ENCODE measurements at regions of chr5 and their contacts with region 1.

Region 1: GRCh38 chr5:68406767-68407241 is 191.2 kb downstream of the PIK3R1 start:
- DNase-seq: no peak
- H3K4me3 Mint-ChIP-seq: no peak overlapping the region
- H3K27ac Mint-ChIP-seq: no peak overlapping the region
- H3K4me1 Mint-ChIP-seq: peaks cover 23% of the 10 kb centered on the region
- H3K27me3 Mint-ChIP-seq: no peaks in the 10 kb centered on the region

Region 2: GRCh38 chr5:68424799-68425537 is 18.2 kb after region 1 on chr5:
- CTCF ChIA-PET with region 1: interaction called, 3 read pairs
- POLR2A ChIA-PET with region 1: no interaction called
- intact Hi-C with region 1: loop called (anchors 2 kb)
- DNase-seq: peak; percentile 35
- H3K4me3 Mint-ChIP-seq: no peak overlapping the region
- H3K27ac Mint-ChIP-seq: no peak overlapping the region
- H3K4me1 Mint-ChIP-seq: peaks cover 42% of the 10 kb centered on the region
- H3K27me3 Mint-ChIP-seq: no peaks in the 10 kb centered on the region